Kidney (tissue), 22 donors: ENCODE measurements at regions of chr1 and their contacts with region 1.

Region 1: GRCh38 chr1:68103884-68104554 is 53.6 kb upstream of the DIRAS3 start:
- DNase-seq: no peak
- H3K4me3 ChIP-seq: no peak overlapping the region
- H3K27ac ChIP-seq: no peak overlapping the region
- H3K4me1 ChIP-seq: no peaks in the 10 kb centered on the region
- H3K27me3 ChIP-seq: no peaks in the 10 kb centered on the region
- CTCF ChIP-seq: no peak

Region 2: DNA sequence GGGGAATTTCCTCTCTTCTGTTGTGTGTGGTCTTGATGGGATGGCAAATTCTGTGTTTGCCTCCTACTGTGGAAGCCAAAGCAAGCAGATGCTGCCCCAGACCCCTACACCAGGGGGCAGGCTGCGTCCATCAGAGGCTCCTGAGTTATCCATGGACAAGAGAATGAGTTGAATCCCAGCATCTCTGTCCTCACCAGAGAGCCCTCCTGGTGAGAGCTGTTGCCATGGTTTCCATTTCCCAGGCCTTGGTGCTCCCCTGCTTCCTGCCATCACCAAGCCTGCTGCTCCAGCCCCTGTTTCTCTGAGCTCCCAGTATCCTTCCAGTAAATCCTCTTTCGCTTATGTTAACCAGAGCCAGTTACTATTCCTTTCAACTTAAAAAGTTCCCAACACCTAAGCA is 250.3 kb before region 1 on chr1:
- intact Hi-C with region 1: loop called (anchors 10 kb)
- DNase-seq: peak; percentile 48 to 76 (median 66)
- H3K4me3 ChIP-seq: no peak overlapping the region
- H3K27ac ChIP-seq: no peak overlapping the region
- H3K4me1 ChIP-seq: peaks cover 0 to 7% (median 0%) of the 10 kb centered on the region in 3 donors
- H3K27me3 ChIP-seq: no peaks in the 10 kb centered on the region
- CTCF ChIP-seq: peak; percentile 70